ENCODE measurements at regions of chr15 and their contacts with region 1.

Region 1: GRCh38 chr15:66187271-66187670 is 66.3 kb downstream of the MEGF11 start:
- DNase-seq: no peak

Region 2: DNA sequence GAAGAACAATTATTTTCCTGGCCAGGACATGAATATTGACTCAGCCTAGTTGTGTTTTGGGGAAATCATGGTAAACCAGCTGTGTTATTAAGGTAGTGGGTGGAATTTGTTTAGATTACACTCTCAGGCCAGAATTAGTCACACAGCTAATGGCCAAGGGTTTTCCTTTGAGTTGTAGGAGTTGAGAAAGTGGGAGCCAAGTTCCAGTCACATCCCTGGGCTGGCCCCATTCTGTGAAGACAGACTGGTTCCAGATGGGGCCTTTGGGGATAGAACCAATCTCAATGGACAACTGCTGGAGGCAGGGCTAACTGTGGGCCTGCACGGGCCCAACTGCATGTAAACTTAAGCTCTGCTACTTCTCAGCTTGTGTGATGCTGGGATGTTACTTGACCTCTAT is 1118.1 kb before region 1 on chr15:
- intact Hi-C with region 1: no loop called
- DNase-seq: no peak

Region 3: DNA sequence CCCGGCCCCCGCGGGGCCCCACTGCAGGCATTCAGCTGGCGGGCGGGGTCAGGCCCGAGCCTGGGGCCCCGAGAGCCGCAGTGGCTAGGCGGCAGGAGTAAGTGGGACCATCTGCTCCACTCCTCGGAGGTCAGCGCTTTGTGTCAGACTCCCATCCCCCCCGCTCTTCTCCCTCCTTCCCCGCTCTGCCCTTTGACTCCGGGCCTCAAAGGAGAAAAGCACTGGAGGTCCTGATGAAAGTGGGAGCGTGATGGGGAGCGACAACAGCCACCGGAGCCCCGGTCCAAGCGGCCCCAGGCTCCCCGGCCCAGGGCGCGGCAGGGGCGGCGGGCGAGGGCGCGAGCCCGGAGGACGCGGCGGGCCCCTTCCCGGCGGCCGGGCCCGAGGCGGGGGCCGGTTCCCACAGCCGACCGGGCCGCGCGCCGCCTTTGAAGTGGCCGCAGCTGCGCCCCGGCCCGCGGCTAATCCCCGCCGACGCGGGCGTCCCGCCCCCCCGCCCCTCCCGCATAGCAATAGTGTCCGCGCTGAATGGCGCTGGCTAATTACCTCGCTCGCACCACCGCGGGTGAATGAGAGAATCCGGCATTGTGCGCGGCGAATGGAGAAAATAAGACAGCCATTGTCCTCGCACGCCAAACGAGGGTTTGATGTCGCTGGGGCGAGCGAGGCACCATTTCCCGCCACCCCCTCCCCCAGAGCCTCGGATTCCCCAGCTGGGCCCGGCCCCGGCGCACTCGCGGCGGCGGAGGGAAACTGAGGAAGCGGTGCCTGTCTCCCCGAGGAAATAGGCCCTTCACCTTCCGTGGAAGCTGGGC is 831.9 kb before region 1 on chr15:
- intact Hi-C with region 1: no loop called
- DNase-seq: peak; percentile 64

Region 4: DNA sequence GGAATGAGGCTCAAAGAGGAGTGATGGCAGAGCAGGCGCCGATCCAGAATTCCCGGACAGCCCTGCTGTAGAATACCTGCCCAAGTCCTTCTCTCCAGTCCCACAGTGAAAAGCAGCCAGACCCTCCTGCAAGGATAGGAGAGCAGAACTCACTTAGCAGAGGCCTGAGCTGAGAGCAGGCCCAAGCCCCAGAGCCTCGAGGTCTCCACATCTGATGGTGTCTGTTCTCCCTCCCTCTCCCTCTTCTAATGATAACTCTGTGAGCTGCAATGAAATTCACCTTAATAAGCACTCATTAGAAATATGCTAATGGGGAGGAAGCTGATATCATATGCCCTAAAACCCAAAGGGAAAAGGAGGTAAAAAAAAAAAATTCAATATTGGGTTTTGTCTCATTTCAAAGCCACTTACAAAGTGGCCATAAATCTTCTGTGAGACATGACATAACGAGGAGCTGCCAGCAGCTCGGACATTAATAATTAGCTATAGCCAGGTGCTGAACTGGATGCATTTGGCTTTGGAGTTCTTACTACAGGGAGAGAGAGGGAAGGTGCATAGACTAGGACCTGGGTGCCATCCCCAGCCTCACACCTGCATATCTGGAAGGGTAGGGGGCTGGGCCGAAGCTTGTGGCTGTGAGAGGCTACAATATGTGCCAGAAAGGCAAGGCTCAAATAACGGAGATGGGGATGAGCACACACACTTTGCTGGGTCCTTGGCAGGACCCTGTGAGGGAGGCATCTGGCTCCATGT is 42.1 kb before region 1 on chr15:
- intact Hi-C with region 1: loop called in 1 of 2 experiments (anchors 1 kb)
- DNase-seq: no peak